ENCODE measurements at regions of chr9 and their contacts with region 1.

Region 1: DNA sequence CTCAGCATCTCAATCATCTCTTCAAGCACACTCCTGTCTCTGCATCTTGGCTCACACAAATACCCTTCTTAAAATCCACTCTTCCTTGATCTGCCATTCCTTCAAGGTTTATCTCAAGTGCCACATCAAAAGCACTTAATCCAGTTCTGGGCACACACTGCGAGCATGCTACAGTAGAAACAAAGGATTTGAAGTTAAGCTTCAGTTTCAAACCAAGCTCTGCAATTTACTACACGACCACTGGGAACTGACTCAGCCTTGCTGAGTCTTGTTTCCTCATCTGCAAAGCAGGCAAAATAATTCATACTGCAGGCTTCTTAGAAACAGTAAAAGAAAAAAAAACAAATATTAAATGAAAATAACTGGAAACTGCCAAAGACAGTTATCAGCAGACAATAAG is 50.5 kb upstream of the CTNNAL1 start:
- DNase-seq: no peak
- ATAC-seq: no peak
- H3K4me3 ChIP-seq: no peak overlapping the region
- H3K27ac ChIP-seq: no peak overlapping the region
- H3K4me1 ChIP-seq: no peaks in the 10 kb centered on the region
- H3K27me3 ChIP-seq: no peaks in the 10 kb centered on the region
- CTCF ChIP-seq: no peak

Region 2: GRCh38 chr9:108963459-108964143 is 100.2 kb before region 1 on chr9:
- CTCF ChIA-PET with region 1: no interaction called
- POLR2A ChIA-PET with region 1: no interaction called
- in situ Hi-C with region 1: no loop called
- intact Hi-C with region 1: loop called (anchors 10 kb)
- DNase-seq: no peak
- ATAC-seq: no peak
- H3K4me3 ChIP-seq: no peak overlapping the region
- H3K27ac ChIP-seq: no peak overlapping the region
- H3K4me1 ChIP-seq: no peaks in the 10 kb centered on the region
- H3K27me3 ChIP-seq: no peaks in the 10 kb centered on the region
- CTCF ChIP-seq: no peak

Measured in Panc1 (cell line).